Mammary epithelial cell (primary cell): ENCODE measurements at regions of chr5 and their contacts with region 1.

Region 1: GRCh38 chr5:129361440-129362025 is 98.6 kb upstream of the ADAMTS19 start:
- DNase-seq: no peak
- H3K4me3 ChIP-seq: no peak overlapping the region
- H3K27ac ChIP-seq: no peak overlapping the region
- H3K4me1 ChIP-seq: peaks cover 10% of the 10 kb centered on the region
- H3K27me3 ChIP-seq: no peaks in the 10 kb centered on the region
- CTCF ChIP-seq: peak; percentile 53 to 58

Region 2: DNA sequence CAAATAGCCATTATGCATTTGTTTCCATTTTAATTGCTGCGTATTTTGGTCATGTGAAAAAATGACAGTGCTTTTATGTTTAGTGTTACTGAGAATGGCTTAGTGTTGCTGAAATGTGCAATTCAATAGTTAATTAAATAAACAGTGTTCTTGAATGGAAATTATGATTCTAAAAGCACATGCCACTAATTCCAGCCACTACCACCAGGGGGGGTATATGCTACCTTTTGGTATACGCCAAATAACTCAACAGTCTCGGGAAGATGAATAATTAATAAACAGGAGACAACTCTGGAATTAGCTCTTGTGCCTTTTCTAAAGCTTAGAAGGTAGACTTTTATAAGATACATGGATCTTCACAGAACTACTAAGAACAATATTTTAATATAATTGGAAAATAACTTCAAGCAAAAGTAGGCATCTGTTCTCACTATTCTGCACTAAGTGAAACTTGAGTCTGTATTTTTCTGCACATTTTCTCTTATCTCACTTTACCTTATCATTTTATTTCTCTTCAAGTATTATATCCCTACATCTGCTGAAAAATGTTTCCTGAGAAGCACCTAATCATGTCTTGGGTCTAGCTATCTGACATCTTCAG is 302.9 kb after region 1 on chr5:
- CTCF ChIA-PET with region 1: no interaction called
- dilution Hi-C with region 1: no loop called
- in situ Hi-C with region 1: no loop called
- intact Hi-C with region 1: loop called (anchors 10 kb)
- DNase-seq: peak; percentile 20
- H3K4me3 ChIP-seq: no peak overlapping the region
- H3K27ac ChIP-seq: no peak overlapping the region
- H3K4me1 ChIP-seq: no peaks in the 10 kb centered on the region
- H3K27me3 ChIP-seq: no peaks in the 10 kb centered on the region
- CTCF ChIP-seq: peak; percentile 85 to 97

Region 3: DNA sequence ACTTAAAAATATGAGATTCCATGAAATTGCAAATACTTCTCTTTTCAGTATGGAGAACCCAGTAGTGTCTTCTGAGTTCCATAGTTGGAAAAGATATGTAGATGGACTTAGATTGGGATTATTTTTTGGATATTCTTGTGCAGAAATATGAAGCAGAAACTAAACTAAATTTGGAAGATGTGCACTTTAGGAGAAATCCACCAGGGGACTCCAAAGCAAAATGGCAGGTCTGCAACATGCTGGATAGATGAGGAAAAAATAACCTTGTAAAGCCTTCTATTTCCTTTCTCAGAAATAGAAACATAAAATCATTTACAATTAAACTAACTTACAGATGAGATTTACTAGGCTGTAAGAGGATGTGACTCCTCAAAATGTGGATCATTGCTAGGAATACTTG is 337.1 kb after region 1 on chr5:
- CTCF ChIA-PET with region 1: no interaction called
- dilution Hi-C with region 1: no loop called
- in situ Hi-C with region 1: no loop called
- intact Hi-C with region 1: no loop called
- DNase-seq: no peak
- H3K4me3 ChIP-seq: no peak overlapping the region
- H3K27ac ChIP-seq: no peak overlapping the region
- H3K4me1 ChIP-seq: no peaks in the 10 kb centered on the region
- H3K27me3 ChIP-seq: no peaks in the 10 kb centered on the region
- CTCF ChIP-seq: peak; percentile 3 to 10